ENCODE measurements at regions of chr1 and their contacts with region 1.

Region 1: DNA sequence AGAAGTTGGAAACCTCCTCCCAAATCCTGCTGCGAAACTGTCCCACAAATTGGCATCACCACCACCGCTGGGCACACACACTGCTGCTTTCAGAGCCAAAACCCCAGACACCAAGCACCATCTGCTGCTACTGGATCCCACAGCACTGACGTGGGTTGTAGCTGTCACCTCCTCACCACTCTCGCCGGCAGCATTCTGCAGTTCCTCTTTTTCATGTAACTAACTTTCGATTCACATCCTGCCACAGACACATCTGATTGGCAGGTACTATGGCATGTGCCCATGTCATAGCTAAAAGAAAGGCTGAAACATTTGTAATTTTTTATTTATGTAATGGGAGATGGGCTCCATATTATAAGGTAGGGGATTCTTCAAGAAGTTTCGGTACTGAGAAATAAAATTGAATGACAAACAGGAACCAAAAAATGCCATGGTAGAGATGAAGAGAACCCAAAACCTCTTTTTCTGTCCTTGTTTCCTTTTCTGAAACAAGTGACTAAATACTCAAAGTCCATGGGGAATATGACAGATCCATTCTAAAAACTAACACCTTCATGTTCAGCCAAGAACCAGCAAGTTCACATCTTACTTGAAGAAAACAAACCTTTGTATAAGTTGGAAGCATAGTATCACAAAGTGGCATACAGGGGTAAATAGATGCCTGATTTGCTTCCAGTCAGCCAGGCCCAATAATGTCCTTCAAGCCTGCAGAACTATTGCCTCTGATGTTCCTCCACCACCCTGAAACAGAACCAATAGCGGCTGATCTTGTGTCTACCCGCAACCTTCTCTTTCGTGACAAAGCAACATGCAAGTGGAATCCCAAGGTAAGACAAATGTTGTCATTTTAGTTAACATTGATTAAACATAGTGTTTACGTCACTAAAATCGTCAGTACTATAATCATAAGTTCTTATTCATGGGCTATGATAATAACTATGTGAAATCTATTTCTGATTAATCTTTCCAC is 26.6 kb upstream of the RGS13 start:
- DNase-seq: peak; percentile 80
- ATAC-seq: peak; percentile 99
- H3K4me3 Mint-ChIP-seq: peak overlapping the region; percentile 65
- H3K27ac Mint-ChIP-seq: peak overlapping the region; percentile 83
- H3K4me1 Mint-ChIP-seq: peaks cover 17% of the 10 kb centered on the region
- H3K27me3 Mint-ChIP-seq: no peaks in the 10 kb centered on the region

Region 2: DNA sequence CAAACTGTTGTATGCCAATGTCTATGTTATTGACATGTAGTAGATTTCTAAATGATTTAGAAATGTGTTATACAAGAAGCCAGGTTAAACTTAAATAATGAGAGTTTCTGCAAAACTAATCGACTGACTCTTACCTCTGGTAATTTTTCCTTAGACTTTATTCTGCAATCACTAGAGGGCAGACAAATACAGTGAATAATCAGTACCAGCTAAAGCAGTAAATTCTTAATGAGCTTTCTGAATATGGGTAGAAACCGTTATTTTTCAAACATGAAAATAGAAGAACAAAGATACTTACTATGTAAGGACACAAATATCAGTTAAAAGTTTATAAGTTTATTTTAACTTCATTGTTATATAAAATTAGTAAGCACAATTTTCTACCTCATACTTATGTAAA is 131.8 kb before region 1 on chr1:
- CTCF ChIA-PET with region 1: interaction called, 65 read pairs
- POLR2A ChIA-PET with region 1: interaction called, 3 read pairs
- DNase-seq: no peak
- ATAC-seq: peak; percentile 55
- H3K4me3 Mint-ChIP-seq: no peak overlapping the region
- H3K27ac Mint-ChIP-seq: no peak overlapping the region
- H3K4me1 Mint-ChIP-seq: no peaks in the 10 kb centered on the region
- H3K27me3 Mint-ChIP-seq: peaks cover 7% of the 10 kb centered on the region

Region 3: GRCh38 chr1:192506741-192507155 is 102.6 kb before region 1 on chr1:
- CTCF ChIA-PET with region 1: interaction called, 10 read pairs
- POLR2A ChIA-PET with region 1: no interaction called
- DNase-seq: no peak
- ATAC-seq: peak; percentile 49
- H3K4me3 Mint-ChIP-seq: no peak overlapping the region
- H3K27ac Mint-ChIP-seq: no peak overlapping the region
- H3K4me1 Mint-ChIP-seq: no peaks in the 10 kb centered on the region
- H3K27me3 Mint-ChIP-seq: no peaks in the 10 kb centered on the region

Measured in activated CD8-positive, alpha-beta T cell treated with anti-CD3 and anti-CD28 coated beads, Interleukin-2, amount 10 ng/mL, durations not matched to agents 7 days and 5 days (primary cell).